HepG2 (cell line): ENCODE measurements at regions of chr18 and their contacts with region 1.

Region 1: GRCh38 chr18:35592298-35592697 is 10.8 kb downstream of the GALNT1 start:
- DNase-seq: no peak
- ATAC-seq: no peak
- H3K4me3 ChIP-seq: no peak overlapping the region
- H3K27ac ChIP-seq: no peak overlapping the region
- H3K4me1 ChIP-seq: peaks cover 48% of the 10 kb centered on the region
- H3K27me3 ChIP-seq: no peaks in the 10 kb centered on the region
- CTCF ChIP-seq: no peak
- EP300 ChIP-seq: no peak
- POLR2A ChIP-seq: no peak
- RAD21 ChIP-seq: no peak

Region 2: DNA sequence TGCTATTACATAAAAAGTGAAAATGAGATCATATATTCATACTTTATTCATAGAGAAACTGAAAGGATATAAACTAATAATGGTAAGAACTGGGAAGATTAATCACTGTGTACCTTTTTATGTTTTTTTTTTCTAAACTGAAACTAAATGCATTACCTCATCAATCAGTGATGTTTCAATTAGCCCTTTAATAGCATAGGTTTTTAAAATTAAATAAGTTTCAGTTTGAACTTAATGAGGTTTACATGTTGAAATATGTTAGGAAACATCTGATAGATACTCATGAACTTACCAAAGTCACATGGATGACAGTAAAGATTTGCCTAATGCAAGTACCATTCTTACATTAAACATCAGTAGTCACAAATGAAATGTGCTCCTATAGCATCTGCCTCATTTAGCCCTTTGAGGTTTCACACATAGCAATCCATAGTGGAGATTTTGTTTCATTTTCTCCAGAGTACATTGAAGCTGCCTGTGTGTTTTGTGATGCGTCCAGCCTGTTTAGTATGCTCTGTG is 542.2 kb before region 1 on chr18:
- CTCF ChIA-PET with region 1: no interaction called
- POLR2A ChIA-PET with region 1: no interaction called
- in situ Hi-C with region 1: no loop called
- intact Hi-C with region 1: no loop called
- DNase-seq: no peak
- ATAC-seq: no peak
- H3K4me3 ChIP-seq: no peak overlapping the region
- H3K27ac ChIP-seq: no peak overlapping the region
- H3K4me1 ChIP-seq: peaks cover 40% of the 10 kb centered on the region
- H3K27me3 ChIP-seq: no peaks in the 10 kb centered on the region
- CTCF ChIP-seq: no peak
- EP300 ChIP-seq: no peak
- POLR2A ChIP-seq: no peak
- RAD21 ChIP-seq: no peak

Region 3: DNA sequence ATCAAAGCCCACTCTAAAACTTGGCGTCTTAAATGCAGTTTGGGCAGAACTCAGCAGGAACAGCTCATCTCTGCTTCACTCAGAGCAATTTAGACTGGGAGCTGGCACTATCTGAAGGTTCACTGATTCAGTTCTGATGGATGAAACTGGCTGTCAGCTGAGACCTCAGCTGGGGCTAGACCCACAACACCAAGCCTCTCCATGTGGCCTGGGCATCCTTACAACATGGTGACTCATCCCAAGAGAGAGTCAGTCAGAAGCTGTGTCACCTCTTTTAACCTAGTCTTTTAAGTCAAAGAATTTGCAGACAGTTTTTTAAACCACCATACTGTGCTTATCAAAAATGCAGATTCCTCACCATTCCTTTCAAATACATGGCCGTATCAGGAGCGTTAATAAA is 414.0 kb before region 1 on chr18:
- CTCF ChIA-PET with region 1: no interaction called
- POLR2A ChIA-PET with region 1: no interaction called
- in situ Hi-C with region 1: no loop called
- intact Hi-C with region 1: loop called (anchors 5 kb)
- DNase-seq: no peak
- ATAC-seq: no peak
- H3K4me3 ChIP-seq: no peak overlapping the region
- H3K27ac ChIP-seq: no peak overlapping the region
- H3K4me1 ChIP-seq: peaks cover 34% of the 10 kb centered on the region
- H3K27me3 ChIP-seq: no peaks in the 10 kb centered on the region; a peak in 1 of 5 replicates
- CTCF ChIP-seq: no peak
- EP300 ChIP-seq: no peak
- POLR2A ChIP-seq: no peak
- RAD21 ChIP-seq: no peak